CD4-positive, alpha-beta memory T cell (primary cell): ENCODE measurements at regions of chrX and their contacts with region 1.

Region 1: DNA sequence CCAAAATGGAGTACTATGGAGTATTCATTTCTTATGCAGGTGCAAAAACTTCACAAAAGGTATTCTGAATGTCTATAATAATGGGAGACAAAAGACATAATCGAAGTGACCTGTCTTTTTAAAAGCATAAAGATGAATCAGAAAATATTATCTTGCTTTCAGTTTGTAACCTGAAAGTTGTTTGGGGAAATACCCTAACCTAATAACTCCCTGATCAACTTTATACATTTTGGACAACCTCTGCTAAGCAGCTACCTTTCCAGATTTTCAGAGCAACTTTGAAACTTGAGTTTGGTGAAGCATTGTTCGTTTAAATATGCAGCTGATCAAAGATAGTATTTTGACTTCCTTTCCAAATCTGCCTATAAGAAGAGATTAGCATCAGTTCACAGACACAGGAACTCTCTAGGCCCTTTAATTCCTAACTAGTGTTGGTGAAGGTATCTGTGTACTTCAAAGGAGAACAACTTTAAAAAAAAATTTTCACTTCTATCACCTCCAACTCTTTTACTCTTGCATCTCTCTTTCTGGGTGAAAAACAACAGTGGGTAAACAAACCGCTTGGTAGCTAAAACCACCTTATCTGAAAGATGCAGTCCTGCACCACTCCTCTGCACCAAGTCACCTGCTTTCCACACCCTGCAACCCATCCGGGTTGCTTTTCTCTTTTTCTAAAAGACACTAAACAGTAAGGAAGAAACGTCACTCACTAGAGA is 26.5 kb downstream of the CD40LG start:
- DNase-seq: peak; percentile 64 to 79 (median 75)
- H3K4me3 ChIP-seq: peak overlapping the region in 1 of 2 donors; percentile 12
- H3K4me3 Mint-ChIP-seq: peak overlapping the region; percentile 37 to 91 (median 78)
- H3K27ac ChIP-seq: peak overlapping the region; percentile 58
- H3K27ac Mint-ChIP-seq: peak overlapping the region; percentile 89 to 99 (median 94)
- H3K4me1 ChIP-seq: peaks cover 98% of the 10 kb centered on the region
- H3K4me1 Mint-ChIP-seq: peaks cover 68 to 100% (median 79%) of the 10 kb centered on the region in 4 donors
- H3K27me3 ChIP-seq: no peaks in the 10 kb centered on the region
- H3K27me3 Mint-ChIP-seq: no peaks in the 10 kb centered on the region

Region 2: DNA sequence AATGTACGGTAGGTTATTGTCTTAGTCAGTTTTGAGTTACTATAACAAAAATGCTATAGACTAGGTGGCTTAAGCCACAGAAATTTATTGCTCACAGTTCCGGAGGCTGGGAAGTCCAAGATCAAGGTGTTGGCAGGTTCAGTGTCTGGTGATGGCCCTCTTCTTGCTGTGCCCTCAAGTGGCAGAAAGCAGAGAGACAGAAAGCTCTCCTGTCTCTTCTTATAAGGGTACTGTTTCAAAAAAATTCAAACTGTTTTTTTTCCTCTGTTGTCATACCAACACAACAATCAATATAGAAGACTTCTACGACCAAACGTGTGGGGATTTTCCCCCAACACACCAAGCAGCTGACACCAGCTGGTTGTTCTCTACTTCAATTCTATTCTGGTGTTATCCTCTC is 320.2 kb before region 1 on chrX:
- CTCF ChIA-PET with region 1: no interaction called
- POLR2A ChIA-PET with region 1: no interaction called
- intact Hi-C with region 1: no loop called
- DNase-seq: no peak
- H3K4me3 ChIP-seq: no peak overlapping the region
- H3K4me3 Mint-ChIP-seq: no peak overlapping the region
- H3K27ac ChIP-seq: no peak overlapping the region
- H3K27ac Mint-ChIP-seq: no peak overlapping the region
- H3K4me1 ChIP-seq: no peaks in the 10 kb centered on the region
- H3K4me1 Mint-ChIP-seq: no peaks in the 10 kb centered on the region
- H3K27me3 ChIP-seq: no peaks in the 10 kb centered on the region
- H3K27me3 Mint-ChIP-seq: peaks cover 1 to 5% of the 10 kb centered on the region in 2 donors

Region 3: DNA sequence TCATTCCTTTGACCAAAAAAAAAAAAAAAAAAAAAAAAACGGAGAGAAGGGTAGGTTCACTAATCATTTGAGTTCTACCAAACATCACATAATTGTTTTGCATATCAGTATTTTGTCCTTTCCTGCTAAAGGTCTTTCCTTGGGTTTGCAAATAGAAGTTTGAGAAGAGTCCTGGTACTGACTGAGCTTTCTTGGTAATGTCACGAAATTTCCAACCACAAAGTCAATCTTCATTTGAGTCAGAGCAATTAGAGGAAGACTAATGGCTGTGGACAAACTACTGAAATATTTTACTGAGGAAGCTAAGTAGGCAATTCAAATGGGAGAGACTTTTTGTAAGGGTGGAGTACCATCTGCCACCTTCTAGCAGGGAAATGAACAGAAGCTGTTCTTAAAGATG is 48.2 kb before region 1 on chrX:
- CTCF ChIA-PET with region 1: no interaction called
- POLR2A ChIA-PET with region 1: interaction called, 15 read pairs
- intact Hi-C with region 1: no loop called
- DNase-seq: no peak
- H3K4me3 ChIP-seq: no peak overlapping the region
- H3K4me3 Mint-ChIP-seq: peak overlapping the region in 7 of 8 donors; percentile 15 to 82 (median 24)
- H3K27ac ChIP-seq: no peak overlapping the region
- H3K27ac Mint-ChIP-seq: peak overlapping the region in 6 of 7 donors; percentile 32 to 94 (median 76)
- H3K4me1 ChIP-seq: peaks cover 90% of the 10 kb centered on the region
- H3K4me1 Mint-ChIP-seq: peaks cover 59 to 91% (median 77%) of the 10 kb centered on the region in 4 donors
- H3K27me3 ChIP-seq: no peaks in the 10 kb centered on the region
- H3K27me3 Mint-ChIP-seq: no peaks in the 10 kb centered on the region

Region 4: DNA sequence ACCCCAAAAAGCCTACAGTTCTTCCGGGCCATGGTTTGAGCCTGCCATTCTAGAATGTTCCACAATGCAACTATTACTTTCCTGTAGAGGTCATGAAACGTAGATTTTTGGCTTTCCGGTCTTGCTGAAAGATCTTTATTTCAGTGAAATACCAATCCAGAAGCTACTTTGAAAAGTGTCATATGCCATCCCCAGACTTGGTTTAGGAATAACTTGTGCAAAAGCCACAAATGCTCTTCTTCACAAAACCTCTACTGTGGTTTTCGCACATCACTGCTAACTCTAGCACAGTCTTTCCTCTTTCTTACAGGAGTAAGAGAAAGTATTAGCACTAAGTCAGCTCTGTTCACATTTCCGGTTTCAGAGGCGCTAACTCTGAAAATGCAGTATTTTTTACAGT is 39.2 kb before region 1 on chrX:
- CTCF ChIA-PET with region 1: no interaction called
- POLR2A ChIA-PET with region 1: interaction called, 10 read pairs
- intact Hi-C with region 1: no loop called
- DNase-seq: peak; percentile 56 to 68 (median 62)
- H3K4me3 ChIP-seq: peak overlapping the region in 1 of 2 donors; percentile 47
- H3K4me3 Mint-ChIP-seq: peak overlapping the region; percentile 51 to 88 (median 82)
- H3K27ac ChIP-seq: peak overlapping the region; percentile 56
- H3K27ac Mint-ChIP-seq: peak overlapping the region; percentile 78 to 96 (median 94)
- H3K4me1 ChIP-seq: peaks cover 97% of the 10 kb centered on the region
- H3K4me1 Mint-ChIP-seq: peaks cover 52 to 94% (median 73%) of the 10 kb centered on the region in 4 donors
- H3K27me3 ChIP-seq: no peaks in the 10 kb centered on the region
- H3K27me3 Mint-ChIP-seq: no peaks in the 10 kb centered on the region

Region 5: GRCh38 chrX:136689436-136689835 is 15.0 kb after region 1 on chrX:
- CTCF ChIA-PET with region 1: interaction called, 5 read pairs
- POLR2A ChIA-PET with region 1: interaction called, 37 read pairs
- intact Hi-C with region 1: loop called (anchors 1 kb)
- DNase-seq: peak in 2 of 5 donors; percentile 27 to 29
- H3K4me3 ChIP-seq: no peak overlapping the region
- H3K4me3 Mint-ChIP-seq: peak overlapping the region in 7 of 8 donors; percentile 34 to 61 (median 59)
- H3K27ac ChIP-seq: peak overlapping the region; percentile 44
- H3K27ac Mint-ChIP-seq: peak overlapping the region; percentile 77 to 99 (median 86)
- H3K4me1 ChIP-seq: peaks cover 89% of the 10 kb centered on the region
- H3K4me1 Mint-ChIP-seq: peaks cover 46 to 77% (median 56%) of the 10 kb centered on the region in 4 donors
- H3K27me3 ChIP-seq: no peaks in the 10 kb centered on the region
- H3K27me3 Mint-ChIP-seq: no peaks in the 10 kb centered on the region

Region 6: DNA sequence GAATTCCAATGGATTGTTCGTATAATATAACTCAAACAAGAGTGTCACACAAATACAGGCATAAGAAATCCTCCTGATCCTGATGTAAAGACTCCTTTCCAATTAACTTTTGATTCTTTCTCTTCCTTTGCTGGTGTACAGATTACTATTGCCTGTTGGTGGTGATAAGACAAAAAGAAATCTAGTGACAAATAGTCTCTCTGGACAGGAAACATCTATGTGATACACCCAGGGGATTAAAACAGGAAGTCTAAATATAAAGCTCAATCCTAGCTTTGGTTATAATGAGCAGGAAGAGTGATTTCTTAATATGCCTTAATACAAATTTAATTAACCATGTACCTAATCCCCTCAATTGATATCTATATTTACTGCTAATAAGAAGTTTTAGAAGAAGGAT is 61.2 kb after region 1 on chrX:
- CTCF ChIA-PET with region 1: no interaction called
- POLR2A ChIA-PET with region 1: no interaction called
- intact Hi-C with region 1: no loop called
- DNase-seq: no peak
- H3K4me3 ChIP-seq: no peak overlapping the region
- H3K4me3 Mint-ChIP-seq: peak overlapping the region in 2 of 8 donors; percentile 10 to 58
- H3K27ac ChIP-seq: no peak overlapping the region
- H3K27ac Mint-ChIP-seq: peak overlapping the region in 4 of 7 donors; percentile 1 to 37 (median 24)
- H3K4me1 ChIP-seq: peaks cover 21% of the 10 kb centered on the region
- H3K4me1 Mint-ChIP-seq: peaks cover 22 to 51% (median 34%) of the 10 kb centered on the region in 4 donors
- H3K27me3 ChIP-seq: no peaks in the 10 kb centered on the region
- H3K27me3 Mint-ChIP-seq: no peaks in the 10 kb centered on the region